B cell (primary cell): ENCODE measurements at regions of chr3 and their contacts with region 1.

Region 1: DNA sequence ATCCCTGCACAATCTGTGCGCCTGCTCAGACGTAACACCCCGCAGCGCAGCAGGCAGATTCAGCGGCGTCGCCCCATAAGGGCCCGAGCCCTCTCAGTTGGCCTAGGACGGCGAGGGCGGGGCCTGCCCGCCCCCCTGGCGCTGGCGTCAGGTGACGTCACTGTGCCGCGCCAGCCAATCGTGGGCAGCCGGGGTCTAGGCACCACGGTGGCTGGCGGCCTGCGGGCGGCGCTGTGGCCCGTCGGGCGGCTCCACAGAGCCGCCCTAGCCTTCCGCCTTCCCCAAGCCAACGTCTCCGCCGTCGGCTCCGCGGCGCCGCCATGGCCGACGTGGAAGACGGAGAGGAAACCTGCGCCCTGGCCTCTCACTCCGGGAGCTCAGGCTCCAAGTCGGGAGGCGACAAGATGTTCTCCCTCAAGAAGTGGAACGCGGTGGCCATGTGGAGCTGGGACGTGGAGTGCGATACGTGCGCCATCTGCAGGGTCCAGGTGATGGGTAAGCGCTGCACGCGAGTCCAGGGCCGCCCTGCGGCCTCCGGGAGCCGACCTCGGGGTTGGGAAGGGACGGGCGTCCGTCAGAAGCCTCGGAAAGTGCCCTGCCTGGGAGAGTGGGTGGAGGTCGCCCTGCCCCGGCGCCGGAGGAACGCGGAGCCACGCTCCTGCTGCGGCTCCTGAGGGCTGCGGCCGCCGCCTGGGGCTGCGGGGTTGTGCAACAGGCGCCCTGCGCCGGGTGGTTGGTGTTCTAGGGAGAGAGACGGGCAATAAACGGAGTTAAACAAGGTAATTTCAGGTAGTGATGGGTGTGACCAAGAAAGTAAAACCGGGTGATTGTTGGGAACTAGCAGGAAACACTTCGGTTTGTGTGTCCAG is at the start of gene RNF7:
- DNase-seq: peak; percentile 98
- ATAC-seq: peak; percentile 95
- H3K4me3 ChIP-seq: peak within 1 kb of the TSS; percentile 93 to 99 (median 95)
- H3K4me3 Mint-ChIP-seq: peak within 1 kb of the TSS; percentile 90
- H3K27ac ChIP-seq: peak within 1 kb of the TSS; percentile 81 to 87
- H3K27ac Mint-ChIP-seq: peak within 1 kb of the TSS; percentile 97
- H3K4me1 ChIP-seq: peaks cover 23 to 30% of the 10 kb centered on the region in 2 donors
- H3K4me1 Mint-ChIP-seq: peaks cover 44% of the 10 kb centered on the region
- H3K27me3 ChIP-seq: no peaks in the 10 kb centered on the region
- H3K27me3 Mint-ChIP-seq: no peaks in the 10 kb centered on the region
- CTCF ChIP-seq: peak; percentile 85
- total RNA-seq, gene RNF7: 40.9 and 47.2 TPM in 2 replicates

Region 2: DNA sequence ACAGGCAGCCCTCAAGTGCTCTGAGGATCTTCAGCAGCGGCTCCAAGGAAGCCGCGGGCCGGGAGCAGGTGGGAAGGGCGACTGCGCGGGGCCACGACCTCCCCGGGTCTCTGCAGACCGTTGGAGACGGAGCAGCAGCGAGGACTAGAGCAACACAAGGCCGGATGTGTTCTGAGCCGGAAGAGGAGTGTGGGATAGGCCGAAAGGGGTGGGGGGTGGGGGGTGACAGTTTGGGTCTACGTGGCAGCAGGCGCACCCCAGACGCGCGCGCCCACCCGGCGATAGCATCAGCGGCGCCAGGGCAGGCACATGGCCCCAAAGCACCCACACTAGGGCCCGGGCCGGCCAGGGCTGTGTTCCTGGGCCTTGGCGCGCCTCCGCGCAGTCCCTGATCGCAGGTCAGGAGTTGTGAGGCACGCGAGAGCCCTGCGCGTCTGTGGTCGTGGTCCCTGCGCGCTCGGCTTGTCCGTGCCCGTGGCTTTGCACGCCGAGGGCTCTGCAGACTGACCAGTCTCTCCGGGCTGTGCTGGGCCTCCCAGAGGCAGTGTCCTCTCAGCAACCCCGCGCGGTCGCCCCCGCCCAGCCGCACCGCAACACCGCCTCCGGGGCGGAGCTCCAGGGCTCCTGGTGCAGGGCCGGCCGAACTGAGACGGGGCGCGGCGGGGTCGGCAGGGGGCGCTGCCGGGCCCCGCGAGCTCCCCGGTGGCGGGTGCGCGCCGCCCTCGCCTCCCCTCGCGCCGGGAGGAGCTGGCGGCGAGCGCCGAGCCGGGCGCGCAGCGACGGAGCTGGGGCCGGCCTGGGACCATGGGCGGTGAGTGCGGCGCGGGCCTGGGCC is 506.9 kb before region 1 on chr3 and contains the start of gene PXYLP1:
- CTCF ChIA-PET with region 1: no interaction called
- POLR2A ChIA-PET with region 1: interaction called, 8 read pairs
- intact Hi-C with region 1: loop called (anchors 1 kb)
- DNase-seq: peak; percentile 90
- ATAC-seq: peak; percentile 96
- H3K4me3 ChIP-seq: peak within 1 kb of the TSS; percentile 61 to 94 (median 71)
- H3K4me3 Mint-ChIP-seq: peak within 1 kb of the TSS; percentile 95
- H3K27ac ChIP-seq: peak within 1 kb of the TSS; percentile 67 to 80
- H3K27ac Mint-ChIP-seq: peak within 1 kb of the TSS; percentile 97
- H3K4me1 ChIP-seq: peaks cover 9 to 16% of the 10 kb centered on the region in 2 donors
- H3K4me1 Mint-ChIP-seq: peaks cover 18% of the 10 kb centered on the region
- H3K27me3 ChIP-seq: peaks cover 0 to 4% (median 0%) of the 10 kb centered on the region in 4 experiments
- H3K27me3 Mint-ChIP-seq: no peaks in the 10 kb centered on the region
- CTCF ChIP-seq: peak; percentile 69
- total RNA-seq, gene PXYLP1: 4.5 and 5.4 TPM in 2 replicates

Region 3: GRCh38 chr3:141575879-141576743 is 162.1 kb before region 1 on chr3:
- CTCF ChIA-PET with region 1: interaction called, 3 read pairs
- POLR2A ChIA-PET with region 1: no interaction called
- intact Hi-C with region 1: loop called (anchors 5 kb)
- DNase-seq: peak; percentile 44
- ATAC-seq: peak; percentile 47
- H3K4me3 ChIP-seq: no peak overlapping the region
- H3K4me3 Mint-ChIP-seq: no peak overlapping the region
- H3K27ac ChIP-seq: peak overlapping the region in 1 of 2 donors; percentile 10
- H3K27ac Mint-ChIP-seq: peak overlapping the region; percentile 62
- H3K4me1 ChIP-seq: peaks cover 0 to 3% of the 10 kb centered on the region in 2 donors
- H3K4me1 Mint-ChIP-seq: peaks cover 6% of the 10 kb centered on the region
- H3K27me3 ChIP-seq: no peaks in the 10 kb centered on the region
- H3K27me3 Mint-ChIP-seq: no peaks in the 10 kb centered on the region
- CTCF ChIP-seq: peak; percentile 70

Region 4: DNA sequence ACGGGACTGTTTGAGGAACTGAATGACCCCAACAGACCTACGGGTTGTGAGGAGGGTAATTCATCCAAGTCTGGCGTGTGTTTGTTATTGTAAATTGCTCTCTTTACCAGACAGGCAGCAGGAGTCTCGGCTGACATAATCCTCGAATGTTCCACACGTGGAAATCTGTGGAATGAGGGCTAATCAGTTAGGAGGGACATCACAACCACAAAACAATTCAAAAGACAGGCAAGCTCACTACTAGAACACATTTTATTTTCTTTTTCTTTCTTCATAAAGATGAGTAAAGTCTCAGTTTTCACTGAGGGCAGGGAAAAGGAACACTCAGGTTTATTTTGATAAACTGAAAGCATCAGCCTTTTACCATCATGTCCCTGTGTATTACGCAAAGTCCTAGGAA is 78.7 kb after region 1 on chr3:
- CTCF ChIA-PET with region 1: no interaction called
- POLR2A ChIA-PET with region 1: no interaction called
- intact Hi-C with region 1: no loop called
- DNase-seq: no peak
- ATAC-seq: no peak
- H3K4me3 ChIP-seq: no peak overlapping the region
- H3K4me3 Mint-ChIP-seq: no peak overlapping the region
- H3K27ac ChIP-seq: no peak overlapping the region
- H3K27ac Mint-ChIP-seq: no peak overlapping the region
- H3K4me1 ChIP-seq: no peaks in the 10 kb centered on the region
- H3K4me1 Mint-ChIP-seq: no peaks in the 10 kb centered on the region
- H3K27me3 ChIP-seq: peaks cover 0 to 6% (median 4%) of the 10 kb centered on the region in 4 experiments
- H3K27me3 Mint-ChIP-seq: peaks cover 37% of the 10 kb centered on the region
- CTCF ChIP-seq: no peak

Region 5: GRCh38 chr3:141913150-141913811 is 175.0 kb after region 1 on chr3:
- CTCF ChIA-PET with region 1: interaction called, 16 read pairs
- POLR2A ChIA-PET with region 1: no interaction called
- intact Hi-C with region 1: loop called (anchors 1 kb)
- DNase-seq: peak; percentile 65
- ATAC-seq: peak; percentile 70
- H3K4me3 ChIP-seq: no peak overlapping the region
- H3K4me3 Mint-ChIP-seq: no peak overlapping the region
- H3K27ac ChIP-seq: no peak overlapping the region
- H3K27ac Mint-ChIP-seq: no peak overlapping the region
- H3K4me1 ChIP-seq: no peaks in the 10 kb centered on the region
- H3K4me1 Mint-ChIP-seq: no peaks in the 10 kb centered on the region
- H3K27me3 ChIP-seq: no peaks in the 10 kb centered on the region
- H3K27me3 Mint-ChIP-seq: no peaks in the 10 kb centered on the region
- CTCF ChIP-seq: peak; percentile 78

Region 6: GRCh38 chr3:142226484-142226883 is 488.2 kb after region 1 on chr3:
- CTCF ChIA-PET with region 1: no interaction called
- POLR2A ChIA-PET with region 1: no interaction called
- intact Hi-C with region 1: loop called (anchors 1 kb)
- DNase-seq: no peak
- ATAC-seq: no peak
- H3K4me3 ChIP-seq: no peak overlapping the region
- H3K4me3 Mint-ChIP-seq: peak overlapping the region; percentile 70
- H3K27ac ChIP-seq: no peak overlapping the region
- H3K27ac Mint-ChIP-seq: peak overlapping the region; percentile 32
- H3K4me1 ChIP-seq: peaks cover 3 to 8% of the 10 kb centered on the region in 2 donors
- H3K4me1 Mint-ChIP-seq: peaks cover 9% of the 10 kb centered on the region
- H3K27me3 ChIP-seq: no peaks in the 10 kb centered on the region
- H3K27me3 Mint-ChIP-seq: no peaks in the 10 kb centered on the region
- CTCF ChIP-seq: no peak

Region 7: GRCh38 chr3:143001369-143002082 is 1263.3 kb after region 1 on chr3 and contains the start of gene U2SURP:
- CTCF ChIA-PET with region 1: no interaction called
- POLR2A ChIA-PET with region 1: no interaction called
- intact Hi-C with region 1: loop called (anchors 5 kb)
- DNase-seq: peak; percentile 95
- ATAC-seq: peak; percentile 96
- H3K4me3 ChIP-seq: peak within 1 kb of the TSS; percentile 73 to 100 (median 97)
- H3K4me3 Mint-ChIP-seq: peak within 1 kb of the TSS; percentile 96
- H3K27ac ChIP-seq: peak within 1 kb of the TSS; percentile 86 to 98
- H3K27ac Mint-ChIP-seq: peak within 1 kb of the TSS; percentile 96
- H3K4me1 ChIP-seq: peaks cover 19 to 20% of the 10 kb centered on the region in 2 donors
- H3K4me1 Mint-ChIP-seq: peaks cover 34% of the 10 kb centered on the region
- H3K27me3 ChIP-seq: no peaks in the 10 kb centered on the region
- H3K27me3 Mint-ChIP-seq: no peaks in the 10 kb centered on the region
- CTCF ChIP-seq: no peak
- total RNA-seq, gene U2SURP: 138 and 169 TPM in 2 replicates